Heart right ventricle (tissue), 16 donors: ENCODE measurements at regions of chr21 and their contacts with region 1.

Region 1: DNA sequence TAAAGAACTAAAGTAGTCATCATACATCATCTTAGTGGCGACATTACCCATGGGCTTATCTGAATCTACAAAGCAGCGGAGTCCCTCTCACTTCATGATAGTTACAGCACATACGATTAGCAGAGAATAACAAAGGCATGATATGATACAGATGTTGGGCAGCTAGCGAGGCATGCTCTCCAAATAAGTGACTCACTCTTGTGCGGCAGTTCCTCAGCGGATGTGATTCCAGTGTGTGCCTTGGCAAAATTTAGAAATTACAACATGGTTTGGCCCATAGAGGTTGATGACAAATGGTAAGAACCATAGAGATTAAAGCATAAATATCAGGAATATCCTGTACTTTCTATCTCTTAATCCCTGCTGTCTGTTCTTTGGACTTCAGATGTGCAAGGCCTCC is 48.1 kb upstream of the PAXBP1 start:
- DNase-seq: peak in 1 of 2 donors; percentile 33
- ATAC-seq: peak in 7 of 8 donors; percentile 62 to 95 (median 86)
- H3K4me3 ChIP-seq: no peak overlapping the region
- H3K27ac ChIP-seq: peak overlapping the region in 1 of 10 donors; percentile 28
- H3K4me1 ChIP-seq: no peaks in the 10 kb centered on the region
- H3K27me3 ChIP-seq: no peaks in the 10 kb centered on the region
- CTCF ChIP-seq: no peak

Region 2: DNA sequence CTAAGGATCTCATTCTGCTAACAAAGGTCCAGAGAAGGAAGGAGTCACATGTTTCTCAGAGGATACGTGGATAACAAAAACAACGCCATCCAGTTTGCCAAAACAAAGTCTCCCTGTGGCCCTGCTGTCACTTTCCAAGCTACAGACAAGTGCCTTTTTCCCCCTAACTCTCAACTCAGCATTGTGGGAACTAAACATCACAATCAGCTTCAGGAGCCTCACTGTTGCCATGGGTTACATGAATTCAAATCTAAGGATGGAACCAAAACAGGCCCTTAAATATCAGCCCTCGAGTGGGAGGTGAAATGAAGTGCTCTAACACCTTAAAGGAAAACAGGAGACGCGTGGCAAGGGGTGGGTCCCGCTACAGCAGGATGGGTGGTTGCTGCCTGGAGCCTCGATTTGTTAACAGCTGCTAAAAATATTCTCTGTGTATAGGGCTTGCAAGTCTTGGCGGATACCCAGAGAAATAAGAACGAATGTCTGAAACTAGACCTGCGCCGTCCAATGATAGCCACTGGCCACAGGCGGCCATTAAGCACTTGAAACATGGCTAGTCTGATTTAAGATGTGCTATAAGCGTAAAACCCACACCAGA is 1226.6 kb before region 1 on chr21:
- intact Hi-C with region 1: no loop called
- DNase-seq: peak in 1 of 2 donors; percentile 14
- ATAC-seq: peak; percentile 37 to 82 (median 55)
- H3K4me3 ChIP-seq: no peak overlapping the region
- H3K27ac ChIP-seq: peak overlapping the region in 1 of 10 donors; percentile 30
- H3K4me1 ChIP-seq: peaks cover 0 to 11% (median 5%) of the 10 kb centered on the region in 9 donors
- H3K27me3 ChIP-seq: no peaks in the 10 kb centered on the region
- CTCF ChIP-seq: no peak

Region 3: DNA sequence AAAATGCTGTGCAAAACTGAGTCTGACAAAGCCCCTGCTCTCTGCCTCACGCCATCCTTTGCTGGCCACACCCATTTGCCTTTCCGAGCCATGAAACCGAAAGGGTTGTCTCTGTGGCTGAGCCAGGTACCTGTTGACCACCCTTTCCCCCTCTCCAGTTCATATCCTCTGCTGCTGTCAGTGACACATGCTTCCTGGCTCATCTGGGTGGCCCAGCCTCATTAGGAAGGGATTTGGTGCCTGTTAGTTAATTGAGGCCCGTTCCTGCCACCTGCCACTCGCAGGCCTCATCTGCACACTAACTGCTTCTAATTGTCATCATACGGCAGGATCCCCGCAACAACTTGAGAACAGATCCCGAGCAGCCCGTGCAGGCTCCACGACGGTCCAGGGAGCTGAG is 329.5 kb after region 1 on chr21:
- intact Hi-C with region 1: loop called in 1 of 10 experiments (anchors 10 kb)
- DNase-seq: no peak
- ATAC-seq: no peak
- H3K4me3 ChIP-seq: no peak overlapping the region
- H3K27ac ChIP-seq: no peak overlapping the region
- H3K4me1 ChIP-seq: peaks cover 0 to 4% (median 0%) of the 10 kb centered on the region in 9 donors
- H3K27me3 ChIP-seq: peaks cover 0 to 75% (median 46%) of the 10 kb centered on the region in 7 donors
- CTCF ChIP-seq: no peak

Region 4: DNA sequence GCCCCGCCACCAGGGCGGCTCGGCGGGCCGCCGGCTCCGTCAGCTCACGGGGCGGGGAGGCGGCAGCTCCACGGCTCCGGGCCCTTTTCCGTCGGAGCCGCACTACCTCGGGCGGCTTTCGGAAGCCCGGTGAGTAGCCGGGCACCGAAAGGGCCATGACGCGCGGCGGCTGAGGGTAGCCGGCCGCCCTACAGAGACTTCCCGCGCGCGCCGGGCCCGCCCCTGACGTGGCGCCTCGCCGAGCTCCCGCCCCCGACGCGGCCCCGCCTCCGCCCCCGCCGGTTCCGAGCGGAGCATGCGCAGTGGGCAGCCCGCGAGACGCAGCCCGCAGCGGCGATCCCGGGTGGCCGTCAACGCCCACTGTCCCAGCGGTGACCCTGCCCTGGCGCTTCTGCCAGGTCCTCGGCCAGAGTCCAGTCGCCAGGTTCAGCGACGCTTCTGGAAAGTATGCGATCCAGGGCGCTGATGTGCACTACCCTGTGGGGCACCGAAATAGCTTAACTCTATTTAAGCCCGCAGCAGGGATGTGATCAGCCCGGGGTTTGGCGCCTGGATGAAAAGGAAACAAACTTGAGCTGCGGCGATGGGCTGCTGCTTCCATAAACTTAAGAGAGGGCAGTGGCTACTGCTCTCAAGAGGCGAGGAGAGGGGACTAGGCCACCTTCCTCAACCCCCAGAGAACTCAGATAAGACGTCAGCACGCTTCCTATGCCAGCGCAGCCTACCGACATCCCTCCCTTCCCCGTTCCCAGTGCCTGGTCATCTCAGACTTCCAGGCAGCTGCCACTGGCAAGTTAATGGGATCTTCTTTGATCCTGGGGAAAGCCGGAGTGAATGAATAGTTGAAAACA is 769.0 kb after region 1 on chr21 and contains the start of gene DONSON:
- intact Hi-C with region 1: no loop called
- DNase-seq: peak; percentile 86 to 94
- ATAC-seq: peak; percentile 93 to 98 (median 97)
- H3K4me3 ChIP-seq: peak within 1 kb of the TSS; percentile 54 to 92 (median 76)
- H3K27ac ChIP-seq: peak within 1 kb of the TSS in 9 of 10 donors; percentile 77 to 94 (median 90)
- H3K4me1 ChIP-seq: peaks cover 0 to 22% (median 16%) of the 10 kb centered on the region in 9 donors
- H3K27me3 ChIP-seq: no peaks in the 10 kb centered on the region
- CTCF ChIP-seq: peak in 3 of 9 donors; percentile 11 to 34 (median 25)
- total RNA-seq, gene DONSON: 3.3 to 6.9 (median 5.5) TPM